ENCODE measurements at regions of chr16 and their contacts with region 1.

Region 1: DNA sequence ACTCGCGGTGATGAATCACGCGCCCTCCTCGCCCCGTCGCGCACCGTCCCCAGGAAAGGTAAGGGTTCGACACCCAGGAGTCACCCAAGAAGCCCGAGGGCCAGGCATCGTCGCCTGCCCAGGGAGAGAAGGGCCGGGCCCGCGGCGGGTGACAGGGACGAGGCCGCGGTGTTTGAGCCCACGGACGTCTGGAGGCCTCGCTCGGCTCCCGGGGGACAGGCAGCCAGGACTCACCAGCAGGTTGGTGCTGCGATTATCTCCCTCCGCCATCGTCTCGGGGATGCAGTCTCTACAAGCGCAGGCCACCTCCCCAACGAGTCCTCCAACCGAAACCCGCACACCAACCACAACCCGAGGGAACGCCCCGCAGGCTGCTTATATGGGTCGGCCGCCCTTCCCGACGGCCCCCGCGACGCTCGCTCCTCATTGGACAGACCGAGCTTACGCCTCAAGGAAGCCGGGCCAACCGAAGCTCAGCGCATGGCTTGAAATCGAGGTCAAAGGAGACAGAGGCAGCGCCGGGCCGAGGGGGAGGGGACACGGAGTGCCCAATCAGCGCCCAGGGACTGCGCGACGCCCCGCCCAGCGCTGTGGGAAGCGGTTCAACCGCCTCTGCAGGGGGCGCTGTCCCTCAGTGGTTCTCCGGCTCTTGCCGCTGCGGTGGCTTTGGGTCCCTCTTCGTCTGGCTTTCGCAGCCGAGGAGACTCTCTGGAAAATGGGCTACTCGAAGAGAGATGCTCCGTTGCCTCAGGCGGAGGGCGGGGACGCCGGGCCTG is at the start of gene ARL6IP1:
- DNase-seq: peak; percentile 97
- H3K4me3 ChIP-seq: peak within 1 kb of the TSS; percentile 97 to 98
- H3K27ac ChIP-seq: peak within 1 kb of the TSS; percentile 86 to 96
- H3K4me1 ChIP-seq: peaks cover 11 to 38% of the 10 kb centered on the region in 2 experiments; a peak in 3 of 4 replicates
- H3K27me3 ChIP-seq: no peaks in the 10 kb centered on the region
- CTCF ChIP-seq: peak; percentile 88
- EP300 ChIP-seq: peak in 1 of 2 experiments; percentile 24; a peak in 1 of 4 replicates
- RAD21 ChIP-seq: peak; percentile 61
- polyA plus RNA-seq, gene ARL6IP1: 95.8 and 104 TPM in 2 replicates

Region 2: DNA sequence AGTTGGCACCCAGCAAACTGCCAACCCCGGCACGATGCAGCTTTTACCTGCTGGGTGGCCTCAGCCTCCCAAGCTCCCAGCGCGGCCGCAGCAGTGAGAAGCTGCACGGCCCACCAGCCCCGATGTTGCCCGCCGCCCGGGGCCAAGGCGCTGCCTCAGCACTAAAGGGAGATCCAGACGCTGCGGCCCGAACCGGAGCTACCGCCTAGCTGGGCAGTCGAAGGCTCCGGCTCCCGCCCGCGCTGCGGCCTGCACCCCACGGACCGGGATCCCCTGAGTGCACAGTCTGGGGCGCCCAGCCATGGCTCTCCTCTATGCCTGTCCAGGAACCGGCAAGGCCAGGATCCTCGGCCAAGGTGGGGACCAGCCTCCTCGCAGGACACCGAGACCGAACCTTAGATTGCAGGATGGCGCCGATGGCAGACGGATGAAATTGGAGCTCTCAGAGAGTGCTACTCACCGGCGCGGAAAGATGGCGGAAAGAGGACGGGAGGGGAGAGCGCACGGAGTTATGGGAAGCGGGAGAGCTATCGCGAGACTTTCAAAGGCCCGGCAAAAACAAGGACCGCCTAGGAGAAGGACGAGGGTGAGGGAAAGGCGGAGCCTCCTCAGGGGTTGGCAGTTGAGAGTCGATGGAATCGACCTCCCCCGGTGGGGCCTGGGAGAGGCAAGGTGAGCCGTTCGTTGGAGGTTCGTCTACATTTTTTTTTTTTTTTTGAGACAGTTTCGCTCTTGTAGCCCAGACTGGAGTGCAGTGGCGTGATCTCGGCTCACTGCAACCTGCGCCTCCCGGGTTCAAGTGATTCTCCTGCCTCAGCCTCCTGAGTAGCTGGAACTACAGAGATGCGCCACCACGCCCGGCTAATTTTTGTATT is 11.3 kb before region 1 on chr16 and contains the start of gene RPS15A:
- CTCF ChIA-PET with region 1: interaction called, 18 read pairs
- POLR2A ChIA-PET with region 1: interaction called, 56 read pairs
- DNase-seq: peak; percentile 97
- H3K4me3 ChIP-seq: peak within 1 kb of the TSS; percentile 81 to 91
- H3K27ac ChIP-seq: peak within 1 kb of the TSS; percentile 65 to 86
- H3K4me1 ChIP-seq: peaks cover 17 to 18% of the 10 kb centered on the region in 2 experiments
- H3K27me3 ChIP-seq: no peaks in the 10 kb centered on the region
- CTCF ChIP-seq: no peak
- EP300 ChIP-seq: no peak
- RAD21 ChIP-seq: no peak
- polyA plus RNA-seq, gene RPS15A: 6,745 and 7,967 TPM in 2 replicates

Region 3: GRCh38 chr16:18983565-18984424 is 182.4 kb after region 1 on chr16 and contains the start of gene TMC7:
- CTCF ChIA-PET with region 1: interaction called, 10 read pairs
- POLR2A ChIA-PET with region 1: no interaction called
- DNase-seq: peak; percentile 94
- H3K4me3 ChIP-seq: peak within 1 kb of the TSS; percentile 61 to 77
- H3K27ac ChIP-seq: peak within 1 kb of the TSS; percentile 24 to 33; a peak in 2 of 4 replicates
- H3K4me1 ChIP-seq: peaks cover 0 to 3% of the 10 kb centered on the region in 2 experiments; a peak in 1 of 4 replicates
- H3K27me3 ChIP-seq: no peaks in the 10 kb centered on the region
- CTCF ChIP-seq: peak; percentile 87
- EP300 ChIP-seq: no peak
- RAD21 ChIP-seq: peak; percentile 77
- polyA plus RNA-seq, gene TMC7: 0.66 and 0.93 TPM in 2 replicates

Region 4: GRCh38 chr16:19520861-19521331 is 719.5 kb after region 1 on chr16:
- CTCF ChIA-PET with region 1: no interaction called
- POLR2A ChIA-PET with region 1: no interaction called
- DNase-seq: no peak
- H3K4me3 ChIP-seq: peak overlapping the region; percentile 89 to 94
- H3K27ac ChIP-seq: peak overlapping the region; percentile 71 to 83; a peak in 3 of 4 replicates
- H3K4me1 ChIP-seq: peaks cover 4 to 19% of the 10 kb centered on the region in 2 experiments; a peak in 3 of 4 replicates
- H3K27me3 ChIP-seq: no peaks in the 10 kb centered on the region
- CTCF ChIP-seq: no peak
- EP300 ChIP-seq: no peak
- RAD21 ChIP-seq: no peak